Endothelial cell of umbilical vein (primary cell): ENCODE measurements at regions of chr13 and their contacts with region 1.

Region 1: GRCh38 chr13:35720690-35721554 is 244.4 kb upstream of the MAB21L1 start:
- DNase-seq: peak; percentile 47
- H3K4me3 ChIP-seq: no peak overlapping the region
- H3K27ac ChIP-seq: no peak overlapping the region
- H3K4me1 ChIP-seq: peaks cover 10% of the 10 kb centered on the region
- H3K27me3 ChIP-seq: peaks cover 0 to 3% of the 10 kb centered on the region in 2 experiments
- CTCF ChIP-seq: peak; percentile 92 to 96
- POLR2A ChIP-seq: no peak

Region 2: DNA sequence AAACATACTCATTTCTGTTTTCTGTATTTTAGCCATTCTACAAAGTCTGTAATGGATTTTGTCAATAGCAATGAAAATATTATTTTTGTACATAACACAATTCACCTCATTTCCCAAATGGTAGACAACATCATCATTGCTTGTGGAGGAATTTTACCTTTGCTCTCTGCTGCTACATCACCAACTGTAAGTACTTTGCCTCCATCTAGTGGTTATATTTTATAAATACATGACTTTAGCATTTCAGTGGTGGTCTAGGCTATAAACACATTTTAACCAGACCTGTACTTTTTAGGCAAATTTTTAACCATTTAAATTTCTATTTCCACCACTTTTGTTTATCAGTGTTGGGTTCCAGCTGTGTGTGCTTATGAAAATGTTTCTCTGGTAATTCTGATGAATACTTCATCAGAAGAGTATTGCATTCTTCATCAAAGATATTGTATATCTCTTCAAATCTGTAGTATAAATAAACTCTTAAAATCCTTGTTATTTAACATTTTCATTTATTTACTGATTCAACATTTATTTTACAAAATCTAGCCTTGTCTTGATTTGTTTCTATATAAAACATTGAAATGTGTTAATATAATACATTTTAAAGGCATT is 556.5 kb before region 1 on chr13:
- CTCF ChIA-PET with region 1: interaction called, 26 read pairs
- POLR2A ChIA-PET with region 1: no interaction called
- dilution Hi-C with region 1: no loop called
- intact Hi-C with region 1: loop called (anchors 1 kb)
- DNase-seq: peak; percentile 59
- H3K4me3 ChIP-seq: no peak overlapping the region
- H3K27ac ChIP-seq: no peak overlapping the region
- H3K4me1 ChIP-seq: no peaks in the 10 kb centered on the region
- H3K27me3 ChIP-seq: no peaks in the 10 kb centered on the region
- CTCF ChIP-seq: peak; percentile 25 to 26
- POLR2A ChIP-seq: no peak

Region 3: GRCh38 chr13:35191883-35192282 is 529.0 kb before region 1 on chr13:
- CTCF ChIA-PET with region 1: no interaction called
- POLR2A ChIA-PET with region 1: no interaction called
- dilution Hi-C with region 1: no loop called
- intact Hi-C with region 1: no loop called
- DNase-seq: no peak
- H3K4me3 ChIP-seq: no peak overlapping the region
- H3K27ac ChIP-seq: no peak overlapping the region
- H3K4me1 ChIP-seq: peaks cover 2% of the 10 kb centered on the region
- H3K27me3 ChIP-seq: no peaks in the 10 kb centered on the region
- CTCF ChIP-seq: no peak
- POLR2A ChIP-seq: no peak

Region 4: DNA sequence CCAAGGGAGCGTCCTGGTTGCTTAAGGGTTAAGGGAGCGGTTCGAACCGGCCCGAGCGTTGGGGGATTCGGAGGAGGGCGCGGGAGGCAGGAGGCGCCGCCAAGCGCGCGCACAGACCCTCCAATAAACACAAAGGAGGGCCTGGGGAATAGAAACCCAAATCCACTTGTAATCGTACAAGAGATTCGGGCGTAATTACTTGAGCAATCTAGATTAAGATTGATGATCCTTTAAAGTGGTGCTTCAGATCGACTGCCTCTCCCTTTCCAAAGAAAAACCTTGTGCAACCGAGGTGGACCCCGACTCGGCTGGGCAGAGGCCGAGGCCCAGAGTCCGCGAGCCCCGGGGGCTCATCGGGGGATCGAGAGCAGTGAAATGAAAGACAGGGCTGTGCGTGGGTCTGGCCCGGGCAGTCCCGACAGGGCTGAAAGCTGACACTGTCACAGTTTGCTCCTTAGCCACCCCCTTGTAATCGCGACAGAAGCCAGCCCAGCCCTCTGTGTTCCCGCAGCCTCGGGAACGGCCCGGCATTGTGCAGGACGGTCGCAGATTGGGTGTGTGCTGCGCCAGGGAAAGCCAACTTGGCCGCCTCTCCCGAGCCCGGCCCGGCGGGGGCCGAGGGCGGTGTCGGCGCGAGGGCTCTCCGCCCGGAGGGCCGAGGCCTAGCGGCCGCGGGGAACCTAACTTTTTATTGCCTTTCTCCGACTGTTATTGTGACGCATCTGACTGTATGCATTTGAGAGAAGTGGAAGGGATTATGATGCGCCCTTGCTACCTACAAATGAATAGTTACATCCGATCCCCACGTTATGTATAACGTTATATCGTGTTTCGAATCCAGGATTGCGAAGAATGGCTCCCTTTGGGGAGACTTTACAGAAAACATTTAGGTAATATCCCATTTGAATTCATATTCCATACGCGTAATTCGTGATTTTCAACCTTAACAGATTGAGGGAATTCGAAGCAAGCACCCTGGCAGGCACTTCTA is 250.0 kb before region 1 on chr13:
- CTCF ChIA-PET with region 1: no interaction called
- POLR2A ChIA-PET with region 1: no interaction called
- dilution Hi-C with region 1: no loop called
- intact Hi-C with region 1: loop called (anchors 2 kb)
- DNase-seq: peak; percentile 32
- H3K4me3 ChIP-seq: peak overlapping the region; percentile 40 to 57 (median 52)
- H3K27ac ChIP-seq: no peak overlapping the region
- H3K4me1 ChIP-seq: peaks cover 4% of the 10 kb centered on the region
- H3K27me3 ChIP-seq: no peaks in the 10 kb centered on the region
- CTCF ChIP-seq: no peak
- POLR2A ChIP-seq: no peak

Region 5: GRCh38 chr13:35733827-35734226 is 12.9 kb after region 1 on chr13:
- CTCF ChIA-PET with region 1: interaction called, 18 read pairs
- POLR2A ChIA-PET with region 1: no interaction called
- dilution Hi-C with region 1: no loop called
- intact Hi-C with region 1: no loop called
- DNase-seq: peak; percentile 33
- H3K4me3 ChIP-seq: no peak overlapping the region
- H3K27ac ChIP-seq: no peak overlapping the region
- H3K4me1 ChIP-seq: no peaks in the 10 kb centered on the region
- H3K27me3 ChIP-seq: no peaks in the 10 kb centered on the region
- CTCF ChIP-seq: no peak
- POLR2A ChIP-seq: no peak

Region 6: GRCh38 chr13:35953537-35954206 is 232.8 kb after region 1 on chr13:
- CTCF ChIA-PET with region 1: interaction called, 21 read pairs
- POLR2A ChIA-PET with region 1: no interaction called
- dilution Hi-C with region 1: no loop called
- intact Hi-C with region 1: loop called (anchors 2 kb)
- DNase-seq: peak; percentile 79
- H3K4me3 ChIP-seq: no peak overlapping the region
- H3K27ac ChIP-seq: no peak overlapping the region
- H3K4me1 ChIP-seq: no peaks in the 10 kb centered on the region
- H3K27me3 ChIP-seq: no peaks in the 10 kb centered on the region
- CTCF ChIP-seq: peak; percentile 54 to 57
- POLR2A ChIP-seq: no peak